IMR-90 (cell line): ENCODE measurements at regions of chr12 and their contacts with region 1.

Region 1: DNA sequence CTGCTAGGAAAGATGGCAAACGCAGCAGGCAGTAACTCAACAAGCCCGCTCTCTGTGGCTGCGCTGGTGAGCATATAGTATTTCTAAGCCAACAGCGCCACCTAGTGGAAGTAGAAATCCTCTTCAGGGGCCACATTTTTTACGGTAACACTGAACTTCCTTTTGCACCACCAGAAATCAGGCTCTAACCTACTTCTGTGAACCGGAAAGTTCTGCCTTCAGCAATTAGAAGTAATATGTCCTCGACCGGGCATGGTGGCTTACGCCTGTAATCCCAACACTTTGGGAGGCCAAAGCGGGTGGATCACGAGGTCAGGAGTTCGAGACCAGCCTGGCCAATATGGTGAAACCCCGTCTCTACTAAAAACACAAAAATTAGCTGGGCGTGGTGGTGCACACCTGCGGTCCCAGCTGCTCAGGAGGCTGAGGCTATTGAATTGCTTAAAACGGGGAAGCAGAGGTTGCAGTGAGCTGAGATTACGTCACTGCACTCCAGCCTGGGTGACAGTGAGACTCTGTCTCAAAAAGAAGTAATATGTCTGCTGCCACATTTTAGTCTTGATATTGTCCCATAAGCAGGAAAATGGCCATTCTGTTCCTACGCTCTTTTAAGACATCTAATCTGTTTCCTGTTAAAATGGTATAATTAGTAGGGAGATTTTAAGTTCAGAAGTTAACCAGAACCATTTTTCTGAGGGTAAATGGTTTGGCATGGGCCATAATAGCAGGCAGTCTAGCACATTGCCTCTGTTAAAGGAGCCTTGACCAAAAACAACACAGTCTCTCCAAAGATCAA is 26.8 kb downstream of the APOBEC1 start:
- DNase-seq: peak; percentile 76
- ATAC-seq: peak; percentile 95
- H3K4me3 ChIP-seq: no peak overlapping the region
- H3K27ac ChIP-seq: no peak overlapping the region
- H3K4me1 ChIP-seq: no peaks in the 10 kb centered on the region
- H3K27me3 ChIP-seq: peaks cover 3% of the 10 kb centered on the region
- CTCF ChIP-seq: peak; percentile 94
- POLR2A ChIP-seq: no peak
- RAD21 ChIP-seq: peak; percentile 96

Region 2: DNA sequence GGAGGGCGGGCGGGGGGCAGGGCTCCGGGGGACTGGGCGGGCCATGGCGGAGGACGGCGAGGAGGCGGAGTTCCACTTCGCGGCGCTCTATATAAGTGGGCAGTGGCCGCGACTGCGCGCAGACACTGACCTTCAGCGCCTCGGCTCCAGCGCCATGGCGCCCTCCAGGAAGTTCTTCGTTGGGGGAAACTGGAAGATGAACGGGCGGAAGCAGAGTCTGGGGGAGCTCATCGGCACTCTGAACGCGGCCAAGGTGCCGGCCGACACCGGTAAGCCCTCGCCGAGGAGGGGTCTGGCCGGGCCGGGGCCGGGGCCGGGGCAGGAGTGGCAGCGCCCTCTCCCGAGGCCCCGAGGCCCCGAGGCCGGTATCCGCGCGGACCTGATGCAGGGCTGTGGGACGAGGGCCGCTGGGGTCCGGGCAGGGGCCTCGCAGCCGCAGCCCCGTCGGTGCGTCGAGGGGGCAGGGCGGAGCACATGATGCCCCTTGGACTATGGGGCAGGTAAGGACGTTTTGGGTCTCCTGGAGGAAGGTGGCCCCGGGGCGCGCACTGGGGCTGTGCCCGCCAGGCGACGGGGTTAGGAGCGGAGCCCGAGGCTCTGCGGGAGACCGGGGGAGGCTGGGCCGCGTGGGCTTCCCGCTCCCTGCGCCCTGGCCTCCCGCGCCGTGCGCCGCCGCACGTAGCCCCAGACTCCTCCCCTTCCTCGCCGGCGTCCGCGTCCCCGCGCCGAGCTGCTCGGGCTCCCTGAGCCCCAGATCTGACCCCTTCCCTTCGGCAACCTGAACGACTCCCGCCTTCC is 771.3 kb before region 1 on chr12 and contains the start of gene TPI1:
- CTCF ChIA-PET with region 1: no interaction called
- POLR2A ChIA-PET with region 1: no interaction called
- dilution Hi-C with region 1: no loop called
- in situ Hi-C with region 1: no loop called
- intact Hi-C with region 1: loop called (anchors 5 kb)
- DNase-seq: peak; percentile 74
- ATAC-seq: peak; percentile 82
- H3K4me3 ChIP-seq: peak within 1 kb of the TSS; percentile 87
- H3K27ac ChIP-seq: peak within 1 kb of the TSS; percentile 97
- H3K4me1 ChIP-seq: peaks cover 19% of the 10 kb centered on the region
- H3K27me3 ChIP-seq: no peaks in the 10 kb centered on the region
- CTCF ChIP-seq: no peak
- POLR2A ChIP-seq: peak; percentile 99
- RAD21 ChIP-seq: no peak
- total RNA-seq, gene TPI1: 1,842 and 2,176 TPM in 2 replicates

Region 3: DNA sequence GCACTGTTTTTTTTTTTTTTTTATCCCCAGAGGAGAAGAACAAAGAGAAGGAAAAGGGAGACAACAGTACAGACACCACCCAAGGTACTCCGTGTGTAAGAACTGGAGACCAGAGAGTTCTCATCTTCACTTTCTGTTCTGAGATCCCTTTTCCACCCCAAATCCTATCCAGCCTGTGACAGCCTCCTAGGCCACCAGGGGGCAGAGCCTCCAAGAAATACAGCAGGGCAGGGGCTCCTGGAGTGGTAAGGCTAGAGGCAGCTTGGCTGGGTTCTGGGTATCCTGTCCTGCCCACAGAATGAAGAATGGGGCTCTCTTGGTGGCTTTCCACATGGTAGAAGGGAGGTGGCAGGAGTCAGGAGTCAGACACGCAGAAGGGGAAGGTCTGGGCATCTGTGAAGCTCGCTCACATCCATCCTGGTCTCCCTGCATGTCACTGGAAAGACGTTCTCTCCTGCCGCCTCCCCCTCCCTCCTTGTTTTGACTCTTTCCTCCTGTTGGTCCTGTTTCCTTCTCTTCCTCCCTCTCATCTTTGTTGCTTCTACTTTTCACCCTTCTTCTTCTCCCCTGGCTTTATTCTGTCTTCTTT is 496.8 kb before region 1 on chr12:
- CTCF ChIA-PET with region 1: interaction called, 3 read pairs
- POLR2A ChIA-PET with region 1: no interaction called
- dilution Hi-C with region 1: no loop called
- in situ Hi-C with region 1: no loop called
- intact Hi-C with region 1: loop called (anchors 1 kb)
- DNase-seq: peak; percentile 39
- ATAC-seq: peak; percentile 91
- H3K4me3 ChIP-seq: no peak overlapping the region
- H3K27ac ChIP-seq: no peak overlapping the region
- H3K4me1 ChIP-seq: peaks cover 2% of the 10 kb centered on the region; the same call in 1 of the 2 replicates
- H3K27me3 ChIP-seq: no peaks in the 10 kb centered on the region
- CTCF ChIP-seq: peak; percentile 71
- POLR2A ChIP-seq: no peak
- RAD21 ChIP-seq: peak; percentile 58

Region 4: GRCh38 chr12:7219599-7220243 is 419.2 kb before region 1 on chr12:
- CTCF ChIA-PET with region 1: no interaction called
- POLR2A ChIA-PET with region 1: no interaction called
- dilution Hi-C with region 1: no loop called
- in situ Hi-C with region 1: loop called (anchors 5 kb)
- intact Hi-C with region 1: loop called (anchors 1 kb)
- DNase-seq: peak; percentile 73
- ATAC-seq: peak; percentile 82
- H3K4me3 ChIP-seq: no peak overlapping the region
- H3K27ac ChIP-seq: no peak overlapping the region
- H3K4me1 ChIP-seq: no peaks in the 10 kb centered on the region
- H3K27me3 ChIP-seq: peaks cover 9% of the 10 kb centered on the region
- CTCF ChIP-seq: peak; percentile 97
- POLR2A ChIP-seq: 0 out of 2 replicates have a peak, but pooled peaks have one; percentile 44
- RAD21 ChIP-seq: peak; percentile 99

Region 5: DNA sequence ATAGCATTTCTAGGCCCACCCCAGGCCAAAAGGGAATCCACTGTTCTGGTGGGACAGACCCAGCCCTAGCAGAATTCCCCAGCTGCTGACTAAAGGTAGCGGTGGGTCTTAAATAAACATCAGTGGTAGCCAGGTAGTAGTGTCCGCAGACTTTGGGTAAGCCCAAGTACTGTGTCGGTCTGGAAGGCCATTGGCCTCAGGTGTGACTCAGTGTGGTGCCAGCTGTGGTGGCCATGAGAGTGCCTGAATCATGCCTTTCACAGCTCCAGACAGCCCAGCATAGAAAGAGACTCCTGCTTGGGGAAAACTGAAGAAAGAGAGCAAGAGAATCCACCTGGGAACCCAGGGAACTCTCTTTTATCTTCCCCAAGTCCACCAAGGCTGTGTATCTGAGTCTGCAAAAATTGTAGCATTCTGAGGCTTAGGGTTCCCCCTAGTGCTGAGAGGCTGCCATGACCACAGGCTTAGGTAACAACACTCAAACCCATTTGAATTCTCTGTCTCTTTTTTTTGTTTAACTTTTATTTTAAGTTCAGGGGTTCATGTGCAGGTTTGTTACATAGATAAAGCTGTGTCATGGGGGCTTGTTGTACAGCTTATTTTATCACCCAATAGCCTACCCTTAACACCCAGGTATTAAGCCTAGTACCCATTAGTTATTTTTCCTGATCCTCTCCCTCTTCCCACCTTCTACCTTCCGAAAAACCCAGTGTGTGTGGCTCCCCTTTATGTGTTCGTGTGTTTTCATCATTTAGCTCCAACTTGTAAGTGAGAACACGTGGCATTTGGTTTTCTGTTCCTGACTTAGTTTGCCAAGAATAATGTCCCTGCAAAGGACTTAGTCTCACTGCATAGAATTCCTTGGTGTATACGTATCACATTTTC is 178.3 kb before region 1 on chr12:
- CTCF ChIA-PET with region 1: no interaction called
- POLR2A ChIA-PET with region 1: no interaction called
- dilution Hi-C with region 1: no loop called
- in situ Hi-C with region 1: no loop called
- intact Hi-C with region 1: loop called (anchors 2 kb)
- DNase-seq: peak; percentile 51
- ATAC-seq: peak; percentile 94
- H3K4me3 ChIP-seq: no peak overlapping the region
- H3K27ac ChIP-seq: no peak overlapping the region
- H3K4me1 ChIP-seq: no peaks in the 10 kb centered on the region
- H3K27me3 ChIP-seq: no peaks in the 10 kb centered on the region
- CTCF ChIP-seq: peak; percentile 92
- POLR2A ChIP-seq: peak; percentile 38; the same call in 1 of the 2 replicates
- RAD21 ChIP-seq: peak; percentile 91

Region 6: GRCh38 chr12:8026291-8026900 is 387.4 kb after region 1 on chr12:
- CTCF ChIA-PET with region 1: no interaction called
- POLR2A ChIA-PET with region 1: no interaction called
- dilution Hi-C with region 1: no loop called
- in situ Hi-C with region 1: loop called (anchors 25 kb)
- intact Hi-C with region 1: no loop called
- DNase-seq: peak; percentile 99
- ATAC-seq: peak; percentile 97
- H3K4me3 ChIP-seq: peak overlapping the region; percentile 76
- H3K27ac ChIP-seq: peak overlapping the region; percentile 94
- H3K4me1 ChIP-seq: no peaks in the 10 kb centered on the region
- H3K27me3 ChIP-seq: no peaks in the 10 kb centered on the region
- CTCF ChIP-seq: no peak
- POLR2A ChIP-seq: peak; percentile 94
- RAD21 ChIP-seq: no peak